Naive thymus-derived CD4-positive, alpha-beta T cell (primary cell): ENCODE measurements at regions of chr6 and their contacts with region 1.

Region 1: DNA sequence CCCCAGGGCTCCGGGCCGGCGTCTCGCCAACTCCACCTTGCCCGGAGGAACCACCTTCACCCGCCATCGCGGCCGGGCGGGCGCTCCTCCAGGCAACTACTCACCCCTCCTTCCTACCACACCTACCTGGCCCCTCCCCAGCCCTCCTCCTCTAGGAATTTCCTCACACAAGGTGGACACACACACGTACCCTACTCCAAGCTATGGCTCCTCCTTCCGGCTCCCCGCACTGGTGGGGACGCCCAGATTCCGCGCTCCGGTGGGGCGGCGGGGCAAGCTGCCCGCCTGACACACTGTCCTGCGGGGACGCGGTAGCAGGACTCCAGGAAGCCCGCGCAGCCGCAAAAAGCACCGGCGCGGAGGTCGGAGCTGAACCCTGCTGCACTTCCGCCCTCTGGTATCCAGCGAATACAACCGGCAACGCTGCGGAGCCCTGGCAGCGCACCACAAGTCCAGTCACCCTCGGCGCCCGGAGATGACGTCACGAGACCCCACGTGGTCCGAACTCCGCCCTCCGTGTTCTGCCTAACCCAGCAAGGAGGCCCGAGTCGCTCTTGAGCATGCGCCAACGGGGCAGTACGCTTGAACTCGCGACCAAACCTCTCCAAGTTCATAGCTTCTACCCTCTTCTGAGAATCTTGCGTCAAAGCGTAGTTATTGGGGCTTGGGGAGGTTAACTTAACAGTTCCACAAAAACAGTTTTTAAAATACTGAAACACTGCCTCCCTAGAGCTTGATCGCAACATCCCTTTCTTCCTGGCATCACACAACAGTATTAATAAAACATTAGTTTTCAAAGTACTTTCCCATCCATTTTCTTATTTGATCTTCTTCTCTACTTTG is at the start of gene ATG5:
- DNase-seq: peak; percentile 99
- ATAC-seq: peak; percentile 98
- H3K4me3 ChIP-seq: peak within 1 kb of the TSS; percentile 99
- H3K4me3 Mint-ChIP-seq: peak within 1 kb of the TSS; percentile 96 to 100 (median 98)
- H3K27ac ChIP-seq: peak within 1 kb of the TSS; percentile 95
- H3K27ac Mint-ChIP-seq: peak within 1 kb of the TSS; percentile 95 to 100 (median 98)
- H3K4me1 ChIP-seq: peaks cover 16 to 24% of the 10 kb centered on the region in 2 donors
- H3K4me1 Mint-ChIP-seq: peaks cover 33 to 56% (median 46%) of the 10 kb centered on the region in 7 donors
- H3K27me3 ChIP-seq: no peaks in the 10 kb centered on the region
- H3K27me3 Mint-ChIP-seq: peaks cover 13 to 30% (median 17%) of the 10 kb centered on the region in 5 donors
- total RNA-seq, gene ATG5: 24.0 to 30.9 (median 27.0) TPM

Region 2: GRCh38 chr6:105402939-105403935 is 922.3 kb before region 1 on chr6 and contains the start of gene PREP:
- CTCF ChIA-PET with region 1: no interaction called
- POLR2A ChIA-PET with region 1: no interaction called
- intact Hi-C with region 1: loop called (anchors 1 kb)
- DNase-seq: peak; percentile 64 to 90 (median 81)
- ATAC-seq: peak; percentile 96
- H3K4me3 ChIP-seq: peak within 1 kb of the TSS; percentile 83
- H3K4me3 Mint-ChIP-seq: peak within 1 kb of the TSS; percentile 92 to 98 (median 94)
- H3K27ac ChIP-seq: peak within 1 kb of the TSS; percentile 66
- H3K27ac Mint-ChIP-seq: peak within 1 kb of the TSS; percentile 45 to 92 (median 76)
- H3K4me1 ChIP-seq: peaks cover 27 to 28% of the 10 kb centered on the region in 2 donors
- H3K4me1 Mint-ChIP-seq: peaks cover 43 to 58% (median 54%) of the 10 kb centered on the region in 7 donors
- H3K27me3 ChIP-seq: no peaks in the 10 kb centered on the region
- H3K27me3 Mint-ChIP-seq: peaks cover 0 to 18% (median 14%) of the 10 kb centered on the region in 5 donors
- total RNA-seq, gene PREP: 22.2 to 46.7 (median 32.1) TPM

Region 3: GRCh38 chr6:106097411-106098231 is 227.9 kb before region 1 on chr6:
- CTCF ChIA-PET with region 1: no interaction called
- POLR2A ChIA-PET with region 1: no interaction called
- intact Hi-C with region 1: loop called (anchors 1 to 5 kb)
- DNase-seq: peak in 8 of 9 donors; percentile 60 to 95 (median 90)
- ATAC-seq: peak; percentile 79
- H3K4me3 ChIP-seq: peak overlapping the region; percentile 60
- H3K4me3 Mint-ChIP-seq: peak overlapping the region; percentile 87 to 99 (median 93)
- H3K27ac ChIP-seq: peak overlapping the region; percentile 74
- H3K27ac Mint-ChIP-seq: peak overlapping the region; percentile 93 to 100 (median 97)
- H3K4me1 ChIP-seq: peaks cover 35 to 39% of the 10 kb centered on the region in 2 donors
- H3K4me1 Mint-ChIP-seq: peaks cover 33 to 96% (median 92%) of the 10 kb centered on the region in 7 donors
- H3K27me3 ChIP-seq: no peaks in the 10 kb centered on the region
- H3K27me3 Mint-ChIP-seq: no peaks in the 10 kb centered on the region

Region 4: GRCh38 chr6:106309766-106310373 is 15.7 kb before region 1 on chr6:
- CTCF ChIA-PET with region 1: no interaction called
- POLR2A ChIA-PET with region 1: no interaction called
- intact Hi-C with region 1: no loop called
- DNase-seq: no peak
- ATAC-seq: no peak
- H3K4me3 ChIP-seq: no peak overlapping the region
- H3K4me3 Mint-ChIP-seq: no peak overlapping the region
- H3K27ac ChIP-seq: no peak overlapping the region
- H3K27ac Mint-ChIP-seq: no peak overlapping the region
- H3K4me1 ChIP-seq: peaks cover 8 to 12% of the 10 kb centered on the region in 2 donors
- H3K4me1 Mint-ChIP-seq: peaks cover 25 to 56% (median 40%) of the 10 kb centered on the region in 7 donors
- H3K27me3 ChIP-seq: no peaks in the 10 kb centered on the region
- H3K27me3 Mint-ChIP-seq: no peaks in the 10 kb centered on the region

Region 5: DNA sequence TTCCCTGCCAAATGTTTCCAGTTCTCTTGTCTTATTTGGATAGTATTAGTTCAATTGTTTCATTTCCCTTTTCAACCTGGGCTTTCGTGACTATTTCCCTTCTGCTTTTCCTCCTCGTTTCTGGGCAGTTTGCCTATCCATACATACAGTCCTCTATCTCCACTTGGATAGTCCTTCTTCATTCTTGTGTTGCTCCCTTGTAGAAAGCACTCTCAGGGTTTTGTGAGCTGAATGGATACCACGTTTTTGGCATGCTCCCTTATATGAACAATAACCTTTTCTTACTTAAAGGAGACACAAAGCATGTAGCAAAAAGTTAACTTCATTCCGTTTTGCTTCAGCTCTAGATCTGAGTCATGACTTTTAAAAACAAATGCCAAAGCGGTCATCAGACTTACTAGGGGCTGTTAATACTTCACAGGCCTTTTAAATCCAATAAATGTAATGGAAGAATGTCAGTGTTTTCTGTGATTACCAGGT is 51.5 kb after region 1 on chr6:
- CTCF ChIA-PET with region 1: no interaction called
- POLR2A ChIA-PET with region 1: no interaction called
- intact Hi-C with region 1: no loop called
- DNase-seq: no peak
- ATAC-seq: no peak
- H3K4me3 ChIP-seq: no peak overlapping the region
- H3K4me3 Mint-ChIP-seq: no peak overlapping the region
- H3K27ac ChIP-seq: no peak overlapping the region
- H3K27ac Mint-ChIP-seq: no peak overlapping the region
- H3K4me1 ChIP-seq: no peaks in the 10 kb centered on the region
- H3K4me1 Mint-ChIP-seq: peaks cover 0 to 23% (median 5%) of the 10 kb centered on the region in 7 donors
- H3K27me3 ChIP-seq: peaks cover 0 to 4% of the 10 kb centered on the region in 2 donors
- H3K27me3 Mint-ChIP-seq: peaks cover 0 to 24% (median 8%) of the 10 kb centered on the region in 5 donors

Region 6: DNA sequence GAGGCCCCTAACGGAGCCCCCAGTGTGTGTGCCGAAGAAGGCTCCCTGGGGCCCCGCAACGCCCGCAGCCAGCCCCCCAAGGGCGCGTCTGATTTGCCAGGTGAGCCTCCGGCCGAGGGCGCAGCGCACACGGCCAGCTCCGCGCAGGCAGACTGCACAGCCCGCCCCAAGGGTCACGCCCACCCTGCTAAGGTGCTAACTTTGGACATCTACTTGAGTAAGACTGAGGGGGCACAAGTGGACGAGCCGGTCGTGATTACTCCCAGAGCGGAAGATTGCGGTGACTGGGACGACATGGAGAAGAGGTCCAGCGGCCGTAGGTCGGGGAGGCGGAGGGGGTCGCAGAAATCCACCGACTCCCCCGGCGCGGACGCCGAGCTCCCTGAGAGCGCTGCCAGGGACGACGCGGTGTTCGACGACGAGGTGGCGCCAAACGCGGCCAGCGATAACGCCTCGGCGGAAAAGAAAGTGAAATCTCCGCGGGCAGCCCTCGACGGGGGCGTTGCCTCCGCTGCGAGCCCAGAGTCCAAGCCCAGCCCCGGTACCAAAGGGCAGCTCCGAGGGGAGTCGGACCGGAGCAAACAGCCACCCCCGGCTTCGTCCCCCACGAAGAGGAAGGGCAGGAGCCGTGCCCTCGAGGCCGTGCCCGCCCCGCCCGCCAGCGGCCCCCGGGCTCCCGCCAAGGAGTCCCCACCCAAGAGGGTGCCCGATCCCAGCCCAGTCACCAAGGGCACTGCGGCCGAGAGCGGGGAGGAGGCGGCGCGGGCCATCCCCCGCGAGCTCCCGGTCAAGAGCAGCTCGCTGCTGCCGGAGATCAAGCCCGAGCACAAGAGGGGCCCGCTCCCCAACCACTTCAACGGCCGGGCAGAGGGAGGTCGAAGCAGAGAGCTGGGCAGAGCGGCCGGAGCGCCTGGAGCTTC is 186.8 kb after region 1 on chr6:
- CTCF ChIA-PET with region 1: no interaction called
- POLR2A ChIA-PET with region 1: no interaction called
- intact Hi-C with region 1: loop called (anchors 1 to 2 kb)
- DNase-seq: peak; percentile 68 to 83 (median 78)
- ATAC-seq: peak; percentile 86
- H3K4me3 ChIP-seq: peak overlapping the region; percentile 92
- H3K4me3 Mint-ChIP-seq: peak overlapping the region; percentile 89 to 98 (median 96)
- H3K27ac ChIP-seq: peak overlapping the region; percentile 100
- H3K27ac Mint-ChIP-seq: peak overlapping the region; percentile 92 to 99 (median 96)
- H3K4me1 ChIP-seq: peaks cover 28 to 41% of the 10 kb centered on the region in 2 donors
- H3K4me1 Mint-ChIP-seq: peaks cover 34 to 60% (median 51%) of the 10 kb centered on the region in 7 donors
- H3K27me3 ChIP-seq: no peaks in the 10 kb centered on the region
- H3K27me3 Mint-ChIP-seq: peaks cover 0 to 40% (median 0%) of the 10 kb centered on the region in 5 donors

Region 7: GRCh38 chr6:107033126-107033525 is 707.6 kb after region 1 on chr6:
- CTCF ChIA-PET with region 1: no interaction called
- POLR2A ChIA-PET with region 1: interaction called, 3 read pairs
- intact Hi-C with region 1: loop called (anchors 1 kb)
- DNase-seq: no peak
- ATAC-seq: no peak
- H3K4me3 ChIP-seq: no peak overlapping the region
- H3K4me3 Mint-ChIP-seq: no peak overlapping the region
- H3K27ac ChIP-seq: no peak overlapping the region
- H3K27ac Mint-ChIP-seq: peak overlapping the region in 1 of 9 donors; percentile 24
- H3K4me1 ChIP-seq: peaks cover 3 to 17% of the 10 kb centered on the region in 2 donors
- H3K4me1 Mint-ChIP-seq: peaks cover 22 to 56% (median 46%) of the 10 kb centered on the region in 7 donors
- H3K27me3 ChIP-seq: no peaks in the 10 kb centered on the region
- H3K27me3 Mint-ChIP-seq: no peaks in the 10 kb centered on the region

Region 8: GRCh38 chr6:108074359-108075144 is 1749.0 kb after region 1 on chr6 and contains the start of gene OSTM1:
- CTCF ChIA-PET with region 1: no interaction called
- POLR2A ChIA-PET with region 1: no interaction called
- intact Hi-C with region 1: loop called in 1 of 2 experiments (anchors 1 kb)
- DNase-seq: peak; percentile 88 to 98 (median 94)
- ATAC-seq: peak; percentile 99
- H3K4me3 ChIP-seq: peak within 1 kb of the TSS; percentile 99
- H3K4me3 Mint-ChIP-seq: peak within 1 kb of the TSS; percentile 84 to 94 (median 90)
- H3K27ac ChIP-seq: peak within 1 kb of the TSS; percentile 89
- H3K27ac Mint-ChIP-seq: peak within 1 kb of the TSS; percentile 81 to 98 (median 91)
- H3K4me1 ChIP-seq: peaks cover 18% of the 10 kb centered on the region in 2 donors
- H3K4me1 Mint-ChIP-seq: peaks cover 11 to 35% (median 23%) of the 10 kb centered on the region in 7 donors
- H3K27me3 ChIP-seq: no peaks in the 10 kb centered on the region
- H3K27me3 Mint-ChIP-seq: peaks cover 0 to 25% (median 4%) of the 10 kb centered on the region in 5 donors
- total RNA-seq, gene OSTM1: 25.0 to 48.9 (median 36.7) TPM